ENCODE measurements at regions of chr2 and their contacts with region 1.

Region 1: DNA sequence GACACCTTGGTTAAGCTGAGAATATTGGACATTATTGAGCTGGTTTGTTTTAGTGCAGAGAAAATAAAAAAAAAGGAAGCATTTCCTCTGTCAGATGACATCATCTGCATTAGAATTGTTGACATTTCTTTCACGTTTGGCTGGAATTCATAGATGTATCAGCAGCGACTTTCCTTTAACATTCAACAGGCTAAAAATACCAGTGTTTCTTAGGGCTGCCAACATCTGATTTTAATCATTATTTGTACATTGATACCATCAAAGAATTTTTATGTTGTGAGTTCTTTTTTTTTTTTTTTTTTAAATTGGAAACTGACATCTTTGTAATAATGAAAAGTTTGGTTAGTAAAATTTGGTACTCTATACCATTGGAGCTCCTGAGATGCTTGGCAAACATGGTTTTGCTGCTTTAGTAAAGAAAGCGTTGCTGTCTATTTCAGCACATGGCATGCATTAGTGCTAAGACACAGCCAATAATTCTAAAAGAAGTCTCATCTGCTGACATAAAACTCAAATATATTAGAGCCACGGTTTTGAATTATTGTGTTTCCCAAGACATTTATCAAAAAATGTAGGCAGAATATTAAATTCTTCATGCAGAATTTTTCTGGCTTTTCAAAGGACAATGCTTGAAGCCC is 33.6 kb downstream of the GTF2A1L start:
- DNase-seq: peak; percentile 22
- H3K4me3 ChIP-seq: no peak overlapping the region
- CTCF ChIP-seq: no peak

Region 2: DNA sequence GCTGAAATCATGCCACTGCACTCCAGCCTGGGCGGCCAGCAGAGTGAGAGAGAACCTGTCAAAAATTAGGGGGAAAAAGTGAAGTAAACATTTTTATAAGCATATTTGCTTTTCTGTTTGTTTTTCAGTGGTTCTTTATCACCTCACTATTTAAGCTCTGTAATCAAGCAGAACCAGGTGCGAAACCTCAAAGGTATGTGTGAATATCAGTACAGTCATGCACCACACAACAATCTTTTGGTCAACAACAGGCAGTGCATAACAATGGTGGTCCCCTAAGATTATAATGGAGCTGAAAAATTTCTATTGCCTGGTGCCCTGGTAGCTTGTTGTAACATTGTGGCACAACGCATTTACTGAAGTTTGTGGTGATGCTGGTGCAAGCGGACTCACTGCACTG is 288.8 kb before region 1 on chr2:
- in situ Hi-C with region 1: no loop called
- DNase-seq: no peak
- H3K4me3 ChIP-seq: no peak overlapping the region
- CTCF ChIP-seq: no peak

Region 3: DNA sequence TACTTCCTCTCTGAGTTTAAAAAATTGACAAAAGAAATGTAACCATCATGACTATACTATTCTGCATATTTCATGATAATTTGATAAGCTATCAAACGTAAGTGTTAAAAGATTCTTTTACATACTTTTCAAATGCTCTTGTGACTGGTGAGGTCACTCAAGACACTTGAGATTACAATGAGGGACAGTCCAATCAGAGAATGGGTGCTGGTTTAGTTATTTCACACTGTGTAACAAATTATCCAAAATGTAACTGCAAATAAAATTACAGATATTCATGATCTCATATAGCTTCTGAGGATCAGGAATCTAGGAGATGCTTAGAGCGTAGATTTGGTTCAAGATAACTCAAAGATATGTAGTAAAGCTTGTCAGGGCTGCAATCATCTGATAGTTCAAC is 38.1 kb before region 1 on chr2:
- in situ Hi-C with region 1: loop called (anchors 5 kb)
- DNase-seq: no peak
- H3K4me3 ChIP-seq: no peak overlapping the region
- CTCF ChIP-seq: no peak

Region 4: DNA sequence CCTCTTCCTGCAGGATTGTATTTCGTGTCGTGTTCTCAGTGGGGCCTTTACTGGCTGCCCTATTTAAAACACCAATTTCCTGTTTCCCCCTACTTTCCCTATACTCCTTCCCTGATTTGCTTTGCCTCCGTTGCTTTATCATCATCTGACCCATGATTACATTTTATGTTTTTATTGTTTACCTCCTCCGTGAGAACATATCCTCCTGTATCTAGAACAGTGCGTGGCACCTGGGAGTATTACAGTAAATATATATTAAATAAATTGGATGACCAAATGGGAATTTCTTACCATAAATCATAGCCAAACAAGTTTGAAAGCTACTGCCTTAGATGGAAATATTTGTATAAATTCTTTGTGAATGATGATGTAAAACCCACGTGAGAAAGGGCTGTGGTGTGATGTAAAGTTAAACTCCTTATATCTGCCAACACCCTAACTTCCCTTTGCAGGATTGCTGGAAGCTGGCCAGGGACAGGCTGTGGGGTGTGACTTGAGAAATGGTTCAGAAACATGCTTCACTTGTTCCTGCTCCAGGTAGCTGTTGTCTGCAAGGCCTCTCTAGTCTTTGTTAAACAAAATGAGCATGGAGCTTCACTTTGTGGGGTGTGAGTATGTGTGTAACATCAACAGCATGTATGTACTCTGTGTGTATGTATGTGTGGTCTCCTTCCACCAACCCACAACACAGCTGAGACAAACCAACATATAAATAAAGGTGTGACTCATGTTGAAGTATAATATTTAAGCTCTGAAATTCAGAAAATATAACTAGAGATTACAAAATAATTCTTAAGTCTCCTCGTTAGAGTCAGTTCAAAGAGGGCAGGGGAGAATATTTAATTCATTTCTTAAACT is 64.0 kb after region 1 on chr2:
- in situ Hi-C with region 1: no loop called
- DNase-seq: no peak
- H3K4me3 ChIP-seq: no peak overlapping the region
- CTCF ChIP-seq: no peak

Region 5: DNA sequence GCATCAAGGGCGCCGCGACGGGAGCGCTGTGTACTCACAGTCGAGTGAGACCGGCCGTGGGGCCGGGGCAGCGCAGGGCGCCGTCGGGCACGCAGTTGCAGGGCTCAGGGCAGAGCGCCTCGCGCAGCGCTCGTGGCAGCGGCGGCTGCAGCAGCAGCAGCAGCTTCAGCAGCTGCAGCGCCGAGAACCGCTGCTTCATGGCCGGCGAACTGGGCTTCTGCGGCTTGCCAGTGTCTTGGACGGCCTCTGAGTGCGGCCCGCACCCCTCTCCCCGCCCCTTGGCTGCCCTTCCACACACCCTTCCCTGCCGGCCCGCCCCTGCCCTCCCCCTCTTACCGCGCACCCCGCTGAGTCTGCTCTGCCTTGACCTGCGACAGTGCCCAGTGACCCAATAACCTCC is 104.2 kb after region 1 on chr2 and contains the start of gene LHCGR:
- in situ Hi-C with region 1: no loop called
- DNase-seq: no peak
- H3K4me3 ChIP-seq: peak within 1 kb of the TSS; percentile 24
- CTCF ChIP-seq: no peak

Region 6: GRCh38 chr2:48829036-48829435 is 177.8 kb after region 1 on chr2:
- in situ Hi-C with region 1: loop called (anchors 10 kb)
- DNase-seq: peak; percentile 26
- H3K4me3 ChIP-seq: no peak overlapping the region
- CTCF ChIP-seq: no peak